Natural killer cell (primary cell): ENCODE measurements at regions of chr1 and their contacts with region 1.

Region 1: DNA sequence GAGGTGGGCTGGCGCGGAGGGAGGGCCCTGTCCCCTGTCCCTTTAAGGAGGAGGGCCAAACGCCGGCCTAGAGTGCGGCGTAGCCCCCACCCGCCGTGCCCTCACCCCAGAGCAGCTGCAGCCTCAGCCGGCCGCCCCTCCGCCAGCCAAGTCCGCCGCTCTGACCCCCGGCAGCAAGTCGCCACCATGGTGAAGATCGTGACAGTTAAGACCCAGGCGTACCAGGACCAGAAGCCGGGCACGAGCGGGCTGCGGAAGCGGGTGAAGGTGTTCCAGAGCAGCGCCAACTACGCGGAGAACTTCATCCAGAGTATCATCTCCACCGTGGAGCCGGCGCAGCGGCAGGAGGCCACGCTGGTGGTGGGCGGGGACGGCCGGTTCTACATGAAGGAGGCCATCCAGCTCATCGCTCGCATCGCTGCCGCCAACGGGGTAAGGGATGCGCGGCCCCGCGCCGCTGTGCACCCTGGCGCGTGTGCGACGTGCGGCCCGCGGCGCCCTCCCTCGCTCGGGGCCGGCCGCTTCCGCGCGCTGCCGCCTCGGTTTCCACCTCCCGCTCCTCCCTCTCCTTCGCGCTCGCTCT is at the start of gene PGM1:
- DNase-seq: peak; percentile 70 to 85
- ATAC-seq: peak; percentile 81 to 92 (median 85)
- H3K4me3 ChIP-seq: peak within 1 kb of the TSS; percentile 90
- H3K4me3 Mint-ChIP-seq: peak within 1 kb of the TSS; percentile 97
- H3K27ac ChIP-seq: peak within 1 kb of the TSS; percentile 86
- H3K27ac Mint-ChIP-seq: peak within 1 kb of the TSS; percentile 92 to 96
- H3K4me1 ChIP-seq: peaks cover 13% of the 10 kb centered on the region
- H3K4me1 Mint-ChIP-seq: peaks cover 10 to 32% of the 10 kb centered on the region in 2 donors
- H3K27me3 ChIP-seq: no peaks in the 10 kb centered on the region
- H3K27me3 Mint-ChIP-seq: no peaks in the 10 kb centered on the region
- CTCF ChIP-seq: no peak
- total RNA-seq, gene PGM1: 23.5 to 31.4 (median 23.7) TPM

Region 2: DNA sequence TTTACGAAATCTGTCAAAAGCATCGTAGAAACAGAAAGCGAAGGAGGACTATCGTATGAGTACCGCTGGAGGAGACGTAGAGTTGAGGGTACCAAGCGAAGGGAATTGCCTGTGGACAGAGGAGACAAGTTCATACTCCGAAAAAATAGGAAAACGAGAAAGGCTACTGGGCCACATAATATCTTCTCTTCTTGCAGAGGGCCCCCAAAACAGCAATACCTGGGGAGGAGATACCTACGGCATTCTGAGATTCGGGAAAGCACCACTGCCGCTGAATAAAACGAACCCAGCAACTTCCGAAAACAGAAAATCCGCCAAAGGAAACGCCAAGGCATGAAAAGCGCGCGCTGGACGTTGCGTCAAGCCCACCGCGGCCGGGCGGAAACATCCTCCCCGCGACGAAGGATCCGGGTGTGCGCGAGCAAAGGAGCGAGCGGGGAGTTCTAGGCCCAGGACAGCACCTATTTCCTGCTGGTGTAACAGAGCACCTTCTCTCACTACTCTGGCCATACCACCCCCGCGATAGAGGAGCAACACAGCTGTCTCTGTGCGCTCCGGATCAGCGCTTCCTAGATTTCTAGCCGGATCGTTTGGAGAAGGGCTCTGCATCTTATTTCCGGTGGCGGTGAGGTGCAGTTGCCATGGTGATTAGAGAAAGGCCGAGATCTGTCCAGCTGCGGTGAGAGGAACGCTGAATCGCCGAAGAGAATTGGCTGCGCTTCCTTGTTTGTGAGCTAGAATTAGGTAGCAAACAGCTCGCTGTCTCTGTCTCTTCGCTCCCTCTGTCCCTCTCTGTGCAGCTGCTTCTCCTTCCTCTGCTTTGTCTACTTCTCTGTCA is 70.3 kb before region 1 on chr1 and contains the starts of genes EFCAB7 and ITGB3BP:
- intact Hi-C with region 1: loop called (anchors 2 kb)
- DNase-seq: peak; percentile 75 to 91
- ATAC-seq: peak; percentile 83 to 87 (median 84)
- H3K4me3 ChIP-seq: peak within 1 kb of the TSS; percentile 68
- H3K4me3 Mint-ChIP-seq: peak within 1 kb of the TSS; percentile 96
- H3K27ac ChIP-seq: peak within 1 kb of the TSS; percentile 86
- H3K27ac Mint-ChIP-seq: peak within 1 kb of the TSS; percentile 96 to 97
- H3K4me1 ChIP-seq: peaks cover 6% of the 10 kb centered on the region
- H3K4me1 Mint-ChIP-seq: peaks cover 19 to 25% of the 10 kb centered on the region in 2 donors
- H3K27me3 ChIP-seq: no peaks in the 10 kb centered on the region
- H3K27me3 Mint-ChIP-seq: no peaks in the 10 kb centered on the region
- CTCF ChIP-seq: no peak
- total RNA-seq, gene EFCAB7: 5.4 to 7.5 (median 6.0) TPM
- total RNA-seq, gene ITGB3BP: 20.7 to 29.8 (median 21.3) TPM

Region 3: GRCh38 chr1:63892632-63893395 is 299.4 kb after region 1 on chr1:
- intact Hi-C with region 1: loop called (anchors 10 kb)
- DNase-seq: peak; percentile 37 to 62
- ATAC-seq: peak; percentile 89 to 96 (median 94)
- H3K4me3 ChIP-seq: no peak overlapping the region
- H3K4me3 Mint-ChIP-seq: peak overlapping the region; percentile 43
- H3K27ac ChIP-seq: peak overlapping the region; percentile 77
- H3K27ac Mint-ChIP-seq: peak overlapping the region; percentile 80 to 82
- H3K4me1 ChIP-seq: peaks cover 13% of the 10 kb centered on the region
- H3K4me1 Mint-ChIP-seq: peaks cover 19 to 29% of the 10 kb centered on the region in 2 donors
- H3K27me3 ChIP-seq: no peaks in the 10 kb centered on the region
- H3K27me3 Mint-ChIP-seq: peaks cover 16 to 61% of the 10 kb centered on the region in 2 donors
- CTCF ChIP-seq: no peak

Region 4: GRCh38 chr1:64155278-64155677 is 561.9 kb after region 1 on chr1:
- intact Hi-C with region 1: no loop called
- DNase-seq: no peak
- ATAC-seq: no peak
- H3K4me3 ChIP-seq: no peak overlapping the region
- H3K4me3 Mint-ChIP-seq: no peak overlapping the region
- H3K27ac ChIP-seq: no peak overlapping the region
- H3K27ac Mint-ChIP-seq: no peak overlapping the region
- H3K4me1 ChIP-seq: no peaks in the 10 kb centered on the region
- H3K4me1 Mint-ChIP-seq: no peaks in the 10 kb centered on the region
- H3K27me3 ChIP-seq: no peaks in the 10 kb centered on the region
- H3K27me3 Mint-ChIP-seq: peaks cover 6 to 7% of the 10 kb centered on the region in 2 donors
- CTCF ChIP-seq: no peak